Body of pancreas (tissue), 4 donors: ENCODE measurements at regions of chr2 and their contacts with region 1.

Region 1: DNA sequence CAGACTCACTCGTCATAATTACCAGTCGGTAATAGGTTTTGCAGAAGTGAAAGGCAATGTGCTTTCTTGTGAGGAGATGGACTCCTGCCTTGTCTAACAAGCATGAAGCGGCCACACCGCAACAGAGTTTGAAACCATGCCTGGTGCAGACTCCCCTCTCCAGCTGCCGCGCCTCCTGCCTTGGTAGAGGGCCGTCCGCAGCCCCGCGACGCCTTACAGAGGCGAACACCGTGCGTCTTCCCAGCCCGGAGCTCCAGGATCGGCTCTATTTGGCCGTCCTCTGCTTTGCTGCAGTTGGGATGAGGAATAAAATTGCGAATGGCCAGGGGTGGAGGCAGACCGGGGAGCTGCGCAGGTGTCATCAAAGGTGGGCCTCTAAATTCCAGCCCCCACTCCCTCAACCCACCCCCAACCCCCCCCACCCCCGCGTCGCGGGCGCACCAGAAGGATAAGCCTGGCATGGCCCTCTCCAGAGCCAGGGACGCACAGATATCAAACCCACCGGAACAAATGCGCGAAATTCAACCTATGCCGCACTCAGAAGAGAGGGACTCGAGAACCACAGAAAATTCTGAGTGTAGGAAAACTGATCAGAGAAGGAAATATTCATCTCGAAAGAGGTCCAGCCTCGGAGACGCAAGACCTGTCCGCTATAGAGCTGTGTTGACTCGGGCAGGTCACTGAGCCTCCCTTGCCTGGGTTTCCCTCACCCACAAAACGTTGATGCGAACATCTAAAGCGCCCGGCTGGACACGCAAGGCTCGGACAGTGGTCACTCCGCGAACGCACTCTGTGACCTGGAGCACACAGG is 1.1 kb downstream of the TRABD2A start:
- DNase-seq: no peak
- ATAC-seq: no peak
- H3K4me3 ChIP-seq: no peak overlapping the region
- H3K27ac ChIP-seq: no peak overlapping the region
- H3K4me1 ChIP-seq: peaks cover 23% of the 10 kb centered on the region
- H3K27me3 ChIP-seq: peaks cover 0 to 16% of the 10 kb centered on the region in 2 donors
- CTCF ChIP-seq: no peak
- POLR2A ChIP-seq: no peak

Region 2: DNA sequence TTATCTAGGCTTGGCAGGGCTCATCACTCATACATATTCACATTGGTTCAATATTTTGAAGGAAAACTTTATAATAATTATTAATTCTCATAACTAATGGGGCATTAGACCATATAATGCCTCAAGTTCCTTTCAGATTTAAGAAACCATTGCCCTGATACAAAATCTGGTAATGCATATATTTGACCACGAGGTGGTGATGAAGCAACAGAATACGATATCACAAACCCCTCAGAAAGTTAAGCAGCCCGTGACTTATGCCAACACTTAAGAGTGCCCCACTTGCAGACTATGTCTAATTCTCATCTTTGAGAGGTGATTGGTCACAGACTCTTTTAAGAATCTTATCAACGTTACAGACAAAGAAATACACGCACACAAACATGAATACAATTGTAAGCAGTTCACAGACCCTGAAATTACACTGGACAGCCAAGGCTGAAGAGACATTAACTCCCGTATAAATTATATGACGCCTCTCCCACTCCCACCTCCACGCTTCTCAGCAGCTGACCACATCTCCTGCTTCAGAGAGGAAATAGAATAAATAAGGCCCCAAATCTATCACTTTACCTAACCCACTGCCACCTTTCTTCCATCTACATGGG is 384.1 kb before region 1 on chr2:
- intact Hi-C with region 1: loop called (anchors 5 kb)
- DNase-seq: peak; percentile 17 to 39 (median 19)
- ATAC-seq: peak; percentile 78
- H3K4me3 ChIP-seq: no peak overlapping the region
- H3K27ac ChIP-seq: no peak overlapping the region
- H3K4me1 ChIP-seq: peaks cover 4% of the 10 kb centered on the region
- H3K27me3 ChIP-seq: no peaks in the 10 kb centered on the region
- CTCF ChIP-seq: peak; percentile 39 to 81 (median 73)
- POLR2A ChIP-seq: no peak

Region 3: DNA sequence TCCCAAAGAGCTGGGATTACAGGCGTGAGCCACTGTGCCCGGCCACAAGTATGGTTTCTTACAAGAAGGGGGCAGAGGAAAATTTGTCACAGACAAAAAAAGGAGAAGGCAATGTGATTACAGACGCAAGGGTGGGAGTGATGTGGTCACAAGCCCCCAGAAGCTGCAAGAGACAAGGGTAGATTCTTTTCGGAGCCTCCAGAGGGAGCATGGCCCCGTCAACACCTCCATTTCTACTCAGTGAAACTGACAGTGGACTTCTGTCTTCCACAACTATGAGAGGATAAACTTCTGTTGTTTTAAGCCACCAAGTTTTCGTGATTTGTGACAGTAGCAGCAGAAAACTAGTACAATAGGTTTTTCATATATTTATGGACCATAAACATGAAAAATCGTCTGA is 251.3 kb after region 1 on chr2:
- intact Hi-C with region 1: no loop called
- DNase-seq: no peak
- ATAC-seq: no peak
- H3K4me3 ChIP-seq: no peak overlapping the region
- H3K27ac ChIP-seq: no peak overlapping the region
- H3K4me1 ChIP-seq: peaks cover 15% of the 10 kb centered on the region
- H3K27me3 ChIP-seq: no peaks in the 10 kb centered on the region
- CTCF ChIP-seq: peak in 2 of 7 experiments; percentile 23 to 26
- POLR2A ChIP-seq: no peak